ENCODE measurements at regions of chr12 and their contacts with region 1.

Region 1: GRCh38 chr12:27014085-27014858 is at the start of gene TM7SF3:
- DNase-seq: peak; percentile 99
- ATAC-seq: peak; percentile 80
- H3K4me3 ChIP-seq: peak within 1 kb of the TSS; percentile 89
- H3K27ac ChIP-seq: peak within 1 kb of the TSS; percentile 51
- H3K4me1 ChIP-seq: peaks cover 40% of the 10 kb centered on the region
- H3K27me3 ChIP-seq: no peaks in the 10 kb centered on the region
- CTCF ChIP-seq: peak; percentile 98
- total RNA-seq, gene TM7SF3: 109 and 114 TPM in 2 replicates

Region 2: DNA sequence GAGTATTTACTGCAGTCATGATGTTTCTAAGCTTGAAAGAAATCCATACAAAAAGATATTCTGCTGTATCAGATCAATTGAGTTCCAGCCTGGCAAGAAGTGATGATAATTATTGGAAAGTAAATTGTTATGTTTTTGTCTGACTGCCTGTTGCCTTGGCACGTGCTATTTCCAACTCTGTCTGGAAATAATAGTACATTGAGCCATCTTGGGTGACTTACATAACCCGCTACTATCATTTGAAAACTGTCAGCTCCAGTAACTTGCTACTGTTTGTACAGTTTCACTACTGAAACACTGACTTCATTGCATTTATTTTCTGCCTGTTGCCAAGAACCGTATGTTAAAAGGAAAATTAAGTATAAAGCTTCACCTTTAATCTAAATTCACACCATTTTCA is 499.9 kb before region 1 on chr12:
- CTCF ChIA-PET with region 1: no interaction called
- POLR2A ChIA-PET with region 1: no interaction called
- intact Hi-C with region 1: no loop called
- DNase-seq: no peak
- ATAC-seq: no peak
- H3K4me3 ChIP-seq: no peak overlapping the region
- H3K27ac ChIP-seq: no peak overlapping the region
- H3K4me1 ChIP-seq: no peaks in the 10 kb centered on the region
- H3K27me3 ChIP-seq: no peaks in the 10 kb centered on the region
- CTCF ChIP-seq: no peak

Region 3: DNA sequence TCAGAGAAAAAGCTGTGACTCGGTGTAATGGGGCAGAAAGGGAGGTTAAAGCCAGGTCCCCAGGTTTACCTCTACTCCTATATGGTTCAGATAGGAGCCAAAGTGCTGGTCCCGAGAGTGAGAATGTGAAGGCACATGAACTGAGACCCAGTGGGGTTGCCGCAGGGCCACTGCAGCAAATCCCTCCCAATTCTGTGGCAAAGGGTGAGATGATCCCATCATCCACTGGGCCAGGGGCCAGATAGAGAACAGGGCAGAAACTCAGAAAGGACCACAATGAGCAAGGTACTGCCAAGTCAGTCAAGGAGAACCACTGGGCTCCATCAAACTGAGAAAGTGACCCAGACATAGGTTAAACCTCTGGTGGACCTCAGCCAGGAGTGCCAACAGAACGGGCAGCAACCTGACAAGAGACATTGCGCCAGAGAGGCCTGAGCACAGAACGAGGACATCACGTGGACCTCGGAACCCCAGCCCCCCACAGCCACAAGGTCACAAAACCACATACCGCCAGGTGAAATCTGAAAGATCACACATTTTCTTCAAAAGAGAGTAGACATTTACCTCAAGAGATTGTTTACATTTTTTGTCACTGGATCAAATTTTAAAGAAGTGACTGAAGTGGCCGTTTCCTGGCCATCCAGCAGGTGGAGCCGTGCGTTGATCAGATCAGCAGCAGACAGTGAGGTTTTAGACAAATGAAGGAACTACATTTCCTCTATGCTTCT is 160.8 kb before region 1 on chr12:
- CTCF ChIA-PET with region 1: interaction called, 4 read pairs
- POLR2A ChIA-PET with region 1: no interaction called
- intact Hi-C with region 1: loop called (anchors 1 kb)
- DNase-seq: peak; percentile 83
- ATAC-seq: peak; percentile 95
- H3K4me3 ChIP-seq: no peak overlapping the region
- H3K27ac ChIP-seq: no peak overlapping the region
- H3K4me1 ChIP-seq: peaks cover 3% of the 10 kb centered on the region; the same call in 1 of the 2 replicates
- H3K27me3 ChIP-seq: no peaks in the 10 kb centered on the region
- CTCF ChIP-seq: peak; percentile 99

Region 4: DNA sequence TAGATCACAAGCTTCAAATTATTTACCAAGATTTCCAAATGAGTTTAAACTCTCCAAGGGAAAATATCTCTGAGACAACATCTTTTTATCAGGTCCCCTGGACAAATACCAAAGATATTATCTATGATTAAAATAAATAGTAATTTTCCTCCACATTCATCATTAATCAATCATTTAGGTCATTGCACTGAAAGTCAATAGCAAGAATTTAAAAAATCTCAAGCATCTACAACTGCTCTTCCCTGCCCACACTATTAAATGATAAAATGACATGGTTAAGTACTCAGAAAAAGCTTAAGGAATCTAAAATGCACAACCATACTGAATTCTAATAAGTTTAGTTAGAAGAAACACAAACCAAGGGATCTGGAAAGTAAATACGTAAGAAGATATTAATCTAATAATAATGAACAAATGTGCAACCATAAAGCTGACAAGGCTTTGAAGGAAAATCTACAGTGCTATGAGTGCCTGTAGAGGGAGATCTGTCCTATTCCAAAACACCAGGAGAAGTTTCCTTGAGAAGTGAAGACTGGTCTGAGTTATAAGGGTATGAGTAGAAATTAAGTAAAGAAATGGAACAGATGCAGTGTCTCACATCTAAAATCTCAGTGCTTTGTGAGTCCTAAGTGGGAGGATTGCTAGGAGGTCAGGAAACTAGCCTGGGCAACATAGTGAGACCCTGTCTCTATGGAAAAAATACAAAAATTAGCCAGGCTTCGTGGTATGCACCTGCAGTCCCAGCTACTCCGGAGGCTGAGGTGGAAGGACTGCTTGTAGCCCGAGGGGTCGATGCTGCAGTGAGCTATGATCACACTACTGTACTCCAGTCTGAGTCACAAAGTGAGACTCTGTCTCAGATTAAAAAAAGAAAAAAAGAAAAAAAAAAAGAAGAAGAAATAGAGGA is 95.7 kb before region 1 on chr12:
- CTCF ChIA-PET with region 1: interaction called, 5 read pairs
- POLR2A ChIA-PET with region 1: no interaction called
- intact Hi-C with region 1: loop called (anchors 1 kb)
- DNase-seq: no peak
- ATAC-seq: peak; percentile 68
- H3K4me3 ChIP-seq: no peak overlapping the region
- H3K27ac ChIP-seq: no peak overlapping the region
- H3K4me1 ChIP-seq: no peaks in the 10 kb centered on the region
- H3K27me3 ChIP-seq: no peaks in the 10 kb centered on the region
- CTCF ChIP-seq: 0 out of 2 replicates have a peak, but pooled peaks have one; percentile 27

Region 5: DNA sequence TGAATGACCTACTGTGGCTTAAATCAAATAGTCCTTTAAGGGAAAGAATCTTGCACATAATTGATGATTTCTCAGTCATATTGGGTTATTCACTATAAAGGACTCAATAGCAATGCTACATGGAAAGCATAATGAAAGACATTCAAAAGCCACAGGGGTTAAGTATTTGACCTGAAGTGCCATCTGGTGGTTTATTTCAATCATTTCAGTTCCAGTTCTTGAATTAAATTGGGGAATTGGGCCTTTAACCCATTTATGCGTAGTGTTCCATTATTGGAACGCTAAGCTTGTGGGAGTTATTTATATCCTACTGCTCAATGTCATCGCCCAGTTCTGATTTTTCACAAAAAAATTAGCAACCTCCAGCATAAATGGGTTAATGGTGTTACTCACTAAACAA is 109.4 kb after region 1 on chr12:
- CTCF ChIA-PET with region 1: interaction called, 10 read pairs
- POLR2A ChIA-PET with region 1: no interaction called
- intact Hi-C with region 1: loop called (anchors 1 kb)
- DNase-seq: peak; percentile 58
- ATAC-seq: peak; percentile 67
- H3K4me3 ChIP-seq: no peak overlapping the region
- H3K27ac ChIP-seq: no peak overlapping the region
- H3K4me1 ChIP-seq: no peaks in the 10 kb centered on the region
- H3K27me3 ChIP-seq: no peaks in the 10 kb centered on the region
- CTCF ChIP-seq: peak; percentile 66

Region 6: GRCh38 chr12:27243804-27244683 is 229.8 kb after region 1 on chr12 and contains the start of gene STK38L:
- CTCF ChIA-PET with region 1: interaction called, 7 read pairs
- POLR2A ChIA-PET with region 1: no interaction called
- intact Hi-C with region 1: loop called (anchors 1 kb)
- DNase-seq: peak; percentile 98
- ATAC-seq: peak; percentile 94
- H3K4me3 ChIP-seq: peak within 1 kb of the TSS; percentile 80
- H3K27ac ChIP-seq: peak within 1 kb of the TSS; percentile 40
- H3K4me1 ChIP-seq: peaks cover 28% of the 10 kb centered on the region
- H3K27me3 ChIP-seq: no peaks in the 10 kb centered on the region
- CTCF ChIP-seq: peak; percentile 51; the same call in 1 of the 2 replicates
- total RNA-seq, gene STK38L: 19.4 and 32.3 TPM in 2 replicates

Region 7: DNA sequence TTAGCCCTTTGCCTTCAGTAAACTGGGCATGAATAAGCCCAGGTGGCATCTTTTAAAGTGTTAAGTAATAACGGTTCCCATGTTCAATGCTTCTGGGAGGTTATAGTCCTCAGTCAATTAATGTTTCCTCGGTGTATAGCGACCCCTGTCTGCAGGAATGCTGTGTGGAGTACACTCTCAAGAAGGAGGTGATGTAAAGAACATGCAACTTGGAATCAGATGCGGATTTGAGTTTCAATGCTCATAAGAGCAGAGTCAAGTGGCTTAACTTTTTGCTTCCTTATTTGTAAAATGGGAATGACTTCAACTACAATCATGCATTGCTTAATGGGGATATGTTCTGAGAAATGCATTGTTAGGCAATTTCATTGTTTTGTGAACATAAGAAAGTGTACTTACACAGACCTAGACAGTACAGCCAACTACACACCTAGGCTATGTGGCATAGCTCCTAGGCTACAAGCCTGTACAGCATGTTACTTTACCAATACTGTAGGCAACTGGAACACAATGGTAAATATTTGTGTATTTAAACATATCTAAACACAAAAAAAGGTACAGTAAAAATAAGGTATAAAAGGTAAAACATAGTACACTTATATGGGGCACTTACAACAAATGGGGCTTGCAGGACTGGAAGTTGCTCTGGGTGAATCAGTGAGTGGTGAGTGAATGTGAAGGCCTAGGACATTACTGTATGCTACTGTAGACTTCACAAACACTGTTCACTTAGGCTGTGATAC is 689.6 kb after region 1 on chr12:
- CTCF ChIA-PET with region 1: no interaction called
- POLR2A ChIA-PET with region 1: no interaction called
- intact Hi-C with region 1: loop called (anchors 5 kb)
- DNase-seq: peak; percentile 98
- ATAC-seq: peak; percentile 99
- H3K4me3 ChIP-seq: no peak overlapping the region
- H3K27ac ChIP-seq: no peak overlapping the region
- H3K4me1 ChIP-seq: no peaks in the 10 kb centered on the region
- H3K27me3 ChIP-seq: no peaks in the 10 kb centered on the region
- CTCF ChIP-seq: peak; percentile 99; the same call in 1 of the 2 replicates